Esophagus muscularis mucosa (tissue), 4 donors: ENCODE measurements at regions of chr14 and their contacts with region 1.

Region 1: DNA sequence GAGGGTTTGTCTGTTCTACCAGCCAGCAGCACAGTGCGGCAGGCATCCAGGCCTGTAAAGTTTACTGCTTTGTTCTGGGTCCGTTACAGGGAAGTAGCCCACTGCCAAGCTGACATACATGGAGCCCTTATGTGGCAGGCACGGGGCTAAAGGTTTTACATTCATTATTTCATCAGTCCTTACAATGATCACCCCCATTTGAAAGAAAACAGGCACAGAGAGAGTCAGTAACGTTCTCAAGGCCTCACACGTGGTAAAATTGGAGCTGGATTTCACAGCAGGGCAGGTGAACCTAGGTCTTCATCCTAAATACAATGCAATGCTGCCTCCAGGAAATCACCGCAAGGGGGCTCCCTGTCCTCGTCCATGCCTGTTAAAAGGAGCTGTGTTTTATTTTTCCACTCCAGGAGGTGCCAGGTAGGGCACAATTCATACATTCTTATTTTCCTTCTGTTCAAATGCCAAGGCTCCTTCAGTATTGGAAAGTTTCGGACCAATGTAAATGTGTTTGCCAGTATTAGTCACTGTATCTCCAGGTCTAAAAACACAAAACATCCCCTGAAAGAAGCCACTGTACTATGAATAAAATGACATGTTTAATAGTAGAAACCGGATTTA is 172.2 kb upstream of the GZMB start:
- DNase-seq: peak; percentile 92
- H3K4me3 ChIP-seq: no peak overlapping the region
- H3K27ac ChIP-seq: no peak overlapping the region
- H3K4me1 ChIP-seq: peaks cover 16 to 29% (median 24%) of the 10 kb centered on the region in 4 donors
- H3K27me3 ChIP-seq: no peaks in the 10 kb centered on the region
- CTCF ChIP-seq: peak; percentile 69 to 82 (median 72)
- EP300 ChIP-seq: no peak
- POLR2A ChIP-seq: no peak

Region 2: DNA sequence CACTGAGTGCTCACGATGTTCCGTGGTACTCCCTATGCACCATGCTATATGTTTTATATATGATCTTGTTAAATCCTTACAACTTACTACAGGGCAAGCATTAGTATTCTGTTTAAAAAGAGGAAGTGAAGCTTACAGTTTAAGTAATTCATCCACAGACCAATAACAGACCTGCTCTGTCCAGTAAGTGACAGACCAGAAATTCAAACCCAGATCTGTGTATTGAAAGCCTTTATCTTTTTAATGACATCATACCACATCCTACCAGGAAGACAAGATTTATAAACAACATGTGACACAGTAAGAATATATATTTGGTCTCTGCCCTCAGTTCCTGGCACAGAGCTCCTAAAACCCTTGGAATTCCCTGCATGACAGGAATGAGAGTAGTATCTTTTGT is 37.3 kb after region 1 on chr14:
- intact Hi-C with region 1: no loop called
- DNase-seq: no peak
- H3K4me3 ChIP-seq: no peak overlapping the region
- H3K27ac ChIP-seq: no peak overlapping the region
- H3K4me1 ChIP-seq: peaks cover 9 to 16% (median 10%) of the 10 kb centered on the region in 4 donors
- H3K27me3 ChIP-seq: no peaks in the 10 kb centered on the region
- CTCF ChIP-seq: no peak
- EP300 ChIP-seq: no peak
- POLR2A ChIP-seq: no peak

Region 3: DNA sequence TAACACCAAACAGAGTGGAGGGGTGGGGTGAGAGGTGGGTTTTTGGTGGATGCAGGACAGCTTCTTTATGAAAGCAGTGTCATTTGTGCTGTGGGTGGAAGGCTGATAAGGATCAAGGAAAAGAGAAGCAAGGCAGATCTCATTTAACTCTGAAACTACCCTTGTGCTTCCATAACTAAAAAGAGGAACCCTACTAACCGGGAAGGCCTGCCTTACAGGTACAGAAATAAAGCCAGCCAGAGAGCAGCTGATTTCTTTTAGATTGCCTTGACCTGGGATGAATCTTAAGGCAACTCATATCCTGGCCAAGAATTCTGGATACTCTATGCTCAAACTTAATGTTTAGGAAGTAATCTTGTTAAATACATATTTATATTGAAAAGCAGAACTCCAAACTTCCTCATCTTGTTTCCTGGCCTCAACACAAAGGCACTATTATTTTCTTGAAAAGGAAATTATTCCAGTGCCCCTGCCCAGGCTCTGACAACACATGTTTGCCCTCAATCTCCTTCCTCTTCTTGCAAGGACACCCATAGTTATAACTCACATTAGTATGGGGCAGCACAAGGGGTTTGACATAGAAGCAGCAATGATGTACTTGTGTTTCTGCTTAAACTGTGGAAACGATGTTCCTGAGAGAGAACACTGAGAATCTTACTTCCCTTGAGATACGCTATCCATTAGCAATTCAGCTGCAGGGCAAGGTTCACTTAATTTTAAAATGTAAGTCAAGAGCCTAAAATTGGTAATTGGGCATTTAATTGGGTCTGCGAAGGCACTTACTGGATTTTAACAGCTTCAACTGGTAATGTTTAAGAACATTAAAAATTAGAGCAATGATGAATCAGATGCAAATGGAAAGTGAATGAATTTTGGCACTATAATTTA is 70.1 kb after region 1 on chr14:
- intact Hi-C with region 1: no loop called
- DNase-seq: no peak
- H3K4me3 ChIP-seq: no peak overlapping the region
- H3K27ac ChIP-seq: no peak overlapping the region
- H3K4me1 ChIP-seq: peaks cover 43 to 59% (median 57%) of the 10 kb centered on the region in 4 donors
- H3K27me3 ChIP-seq: no peaks in the 10 kb centered on the region
- CTCF ChIP-seq: no peak
- EP300 ChIP-seq: no peak
- POLR2A ChIP-seq: no peak

Region 4: GRCh38 chr14:25042362-25043299 is 236.5 kb after region 1 on chr14:
- intact Hi-C with region 1: loop called (anchors 5 kb)
- DNase-seq: no peak
- H3K4me3 ChIP-seq: peak overlapping the region in 1 of 4 donors; percentile 18
- H3K27ac ChIP-seq: peak overlapping the region in 1 of 4 donors; percentile 25
- H3K4me1 ChIP-seq: peaks cover 62 to 78% (median 68%) of the 10 kb centered on the region in 4 donors
- H3K27me3 ChIP-seq: no peaks in the 10 kb centered on the region
- CTCF ChIP-seq: peak; percentile 50 to 56 (median 52)
- EP300 ChIP-seq: no peak
- POLR2A ChIP-seq: no peak

Region 5: DNA sequence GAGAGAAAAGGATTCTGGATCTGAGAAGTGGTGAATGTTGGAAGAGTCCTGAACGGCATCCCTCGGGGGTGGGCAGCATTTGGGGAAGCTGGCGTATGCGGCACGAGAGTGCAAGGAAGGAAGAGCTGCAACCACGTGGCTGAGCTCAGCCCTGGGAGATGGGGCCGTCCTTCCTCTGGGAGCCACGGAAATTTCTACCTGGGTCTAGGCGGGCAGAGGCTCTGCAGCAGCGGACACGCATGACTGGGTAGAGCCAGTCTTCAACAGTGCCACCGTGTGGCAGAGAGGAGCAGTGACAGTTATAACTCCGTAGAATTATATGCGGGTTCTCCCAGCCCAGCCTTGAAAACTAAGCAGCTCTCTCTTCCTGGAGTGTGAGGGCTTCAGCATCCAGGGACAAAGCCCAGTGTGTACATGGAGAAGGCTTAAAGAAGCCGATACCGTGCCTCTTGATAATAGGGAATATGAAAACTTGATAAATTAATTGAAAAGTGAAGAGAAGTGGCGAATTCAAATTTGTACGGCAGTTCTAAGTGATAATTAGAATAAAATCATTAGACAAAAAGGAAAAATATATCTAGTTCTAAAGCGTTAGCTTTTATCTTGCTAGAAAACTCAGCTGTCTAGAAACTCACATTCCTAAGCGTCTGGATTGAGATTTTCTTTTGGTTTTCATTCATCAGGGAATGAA is 326.7 kb after region 1 on chr14:
- intact Hi-C with region 1: loop called (anchors 2 kb)
- DNase-seq: no peak
- H3K4me3 ChIP-seq: peak overlapping the region in 1 of 4 donors; percentile 23
- H3K27ac ChIP-seq: no peak overlapping the region
- H3K4me1 ChIP-seq: peaks cover 7 to 10% (median 8%) of the 10 kb centered on the region in 4 donors
- H3K27me3 ChIP-seq: peaks cover 0 to 22% (median 0%) of the 10 kb centered on the region in 4 donors
- CTCF ChIP-seq: peak; percentile 85 to 92 (median 90)
- EP300 ChIP-seq: no peak
- POLR2A ChIP-seq: no peak